CD14-positive monocyte (primary cell): ENCODE measurements at regions of chr1 and their contacts with region 1.

Region 1: GRCh38 chr1:151047925-151048645 is 534 bp downstream of the C1orf56 start:
- DNase-seq: peak; percentile 47 to 63 (median 51)
- H3K4me3 ChIP-seq: peak overlapping the region; percentile 66 to 83 (median 70)
- H3K4me3 Mint-ChIP-seq: peak overlapping the region; percentile 95 to 99
- H3K27ac ChIP-seq: no peak overlapping the region
- H3K27ac Mint-ChIP-seq: peak overlapping the region in 6 of 7 donors; percentile 65 to 84 (median 71)
- H3K4me1 ChIP-seq: peaks cover 26 to 37% of the 10 kb centered on the region in 2 donors
- H3K4me1 Mint-ChIP-seq: peaks cover 48% of the 10 kb centered on the region
- H3K27me3 ChIP-seq: peaks cover 3 to 20% of the 10 kb centered on the region in 2 donors
- H3K27me3 Mint-ChIP-seq: peaks cover 2 to 30% (median 27%) of the 10 kb centered on the region in 3 donors
- CTCF ChIP-seq: no peak

Region 2: GRCh38 chr1:151013518-151013917 is 34.6 kb before region 1 on chr1:
- intact Hi-C with region 1: loop called in 1 of 2 experiments (anchors 5 kb)
- DNase-seq: no peak
- H3K4me3 ChIP-seq: no peak overlapping the region
- H3K4me3 Mint-ChIP-seq: no peak overlapping the region
- H3K27ac ChIP-seq: no peak overlapping the region
- H3K27ac Mint-ChIP-seq: no peak overlapping the region
- H3K4me1 ChIP-seq: peaks cover 9 to 13% of the 10 kb centered on the region in 2 donors
- H3K4me1 Mint-ChIP-seq: peaks cover 16% of the 10 kb centered on the region
- H3K27me3 ChIP-seq: no peaks in the 10 kb centered on the region
- H3K27me3 Mint-ChIP-seq: peaks cover 0 to under 1% (median 0%) of the 10 kb centered on the region in 3 donors
- CTCF ChIP-seq: no peak